Left ventricle myocardium inferior (tissue), 1 donor: ENCODE measurements at regions of chr5 and their contacts with region 1.

Region 1: DNA sequence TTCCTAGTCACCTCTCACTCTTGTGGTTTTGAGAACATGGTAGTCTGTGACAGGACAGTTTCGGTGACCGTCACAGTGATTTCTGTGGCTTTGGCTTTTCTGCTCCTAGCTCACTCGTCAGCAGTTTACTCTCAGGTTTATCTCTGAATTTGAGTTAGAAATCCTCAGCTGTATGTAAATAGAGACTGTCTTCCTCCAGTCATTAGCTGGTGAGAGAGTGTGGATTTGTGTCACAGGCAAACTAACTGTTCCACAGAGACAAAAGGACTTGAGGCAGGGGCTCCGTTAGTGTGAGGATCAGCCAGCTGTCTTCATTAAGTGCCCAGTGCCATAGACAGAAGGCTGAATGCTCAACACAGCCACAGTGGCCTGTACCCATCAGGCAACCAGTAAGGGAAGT is 131.4 kb downstream of the CD180 start:
- DNase-seq: no peak
- H3K4me3 ChIP-seq: no peak overlapping the region
- H3K27ac ChIP-seq: no peak overlapping the region
- H3K4me1 ChIP-seq: peaks cover 88% of the 10 kb centered on the region
- H3K27me3 ChIP-seq: no peaks in the 10 kb centered on the region
- CTCF ChIP-seq: no peak

Region 2: GRCh38 chr5:67010684-67011409 is 54.4 kb before region 1 on chr5:
- intact Hi-C with region 1: loop called (anchors 10 kb)
- DNase-seq: no peak
- H3K4me3 ChIP-seq: peak overlapping the region; percentile 21
- H3K27ac ChIP-seq: peak overlapping the region; percentile 73
- H3K4me1 ChIP-seq: peaks cover 99% of the 10 kb centered on the region
- H3K27me3 ChIP-seq: no peaks in the 10 kb centered on the region
- CTCF ChIP-seq: no peak